A549 (cell line): ENCODE measurements at regions of chr12 and their contacts with region 1.

Region 1: GRCh38 chr12:53984901-53985709 is at the start of gene HOXC10:
- DNase-seq: peak; percentile 93 to 97
- ATAC-seq: peak; percentile 74 to 83
- H3K4me3 ChIP-seq: peak within 1 kb of the TSS; percentile 60
- H3K27ac ChIP-seq: peak within 1 kb of the TSS; percentile 88 to 89
- H3K4me1 ChIP-seq: peaks cover 24% of the 10 kb centered on the region
- CTCF ChIP-seq: peak; percentile 84
- EP300 ChIP-seq: no peak
- POLR2A ChIP-seq: no peak
- RAD21 ChIP-seq: peak; percentile 90 to 94
- polyA plus RNA-seq, gene HOXC10: 2.5 and 2.9 TPM in 2 replicates

Region 2: DNA sequence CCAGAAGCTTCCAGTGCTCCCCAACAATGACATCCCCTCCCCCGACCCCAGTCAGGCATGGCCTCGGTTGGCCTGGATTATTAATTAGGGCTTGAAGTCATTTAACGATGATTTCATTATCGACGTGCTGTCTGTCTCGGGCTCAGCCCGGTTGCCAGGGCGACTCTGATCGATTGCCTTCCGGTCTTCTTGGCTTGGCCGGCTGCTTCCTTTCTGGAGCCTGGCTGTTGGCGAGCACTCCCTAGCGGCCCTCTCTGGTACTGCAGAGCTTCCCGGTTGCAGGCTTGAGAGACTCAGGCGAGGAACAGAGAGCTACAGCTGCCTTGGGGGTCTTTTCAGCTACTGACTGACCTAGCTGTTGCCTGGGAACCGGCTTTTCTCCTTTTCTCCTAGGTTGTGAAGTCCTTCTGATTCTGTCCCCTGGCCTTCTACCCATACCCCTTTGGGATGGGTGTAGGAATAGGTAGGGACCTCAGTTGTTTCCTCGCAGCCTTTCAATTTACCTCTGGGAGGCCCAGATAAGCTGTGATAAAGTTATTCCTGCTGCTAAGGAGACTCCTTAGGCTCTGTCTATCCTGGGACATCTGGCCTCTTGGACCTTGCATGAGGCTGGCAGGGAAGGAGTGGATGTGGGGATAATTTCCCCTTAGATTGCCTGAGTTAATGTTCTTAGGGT is 227.9 kb before region 1 on chr12:
- CTCF ChIA-PET with region 1: interaction called, 12 read pairs
- POLR2A ChIA-PET with region 1: no interaction called
- DNase-seq: peak; percentile 78 to 86
- ATAC-seq: peak; percentile 59 to 84; a peak in 5 of 6 replicates
- H3K4me3 ChIP-seq: peak overlapping the region; percentile 30; the same call in 2 of the 3 replicates
- H3K27ac ChIP-seq: peak overlapping the region; percentile 53 to 73; a peak in 5 of 6 replicates
- H3K4me1 ChIP-seq: peaks cover 11% of the 10 kb centered on the region; the same call in 1 of the 3 replicates
- CTCF ChIP-seq: peak; percentile 65
- EP300 ChIP-seq: no peak
- POLR2A ChIP-seq: no peak
- RAD21 ChIP-seq: peak; percentile 24 to 60; a peak in 3 of 5 replicates

Region 3: DNA sequence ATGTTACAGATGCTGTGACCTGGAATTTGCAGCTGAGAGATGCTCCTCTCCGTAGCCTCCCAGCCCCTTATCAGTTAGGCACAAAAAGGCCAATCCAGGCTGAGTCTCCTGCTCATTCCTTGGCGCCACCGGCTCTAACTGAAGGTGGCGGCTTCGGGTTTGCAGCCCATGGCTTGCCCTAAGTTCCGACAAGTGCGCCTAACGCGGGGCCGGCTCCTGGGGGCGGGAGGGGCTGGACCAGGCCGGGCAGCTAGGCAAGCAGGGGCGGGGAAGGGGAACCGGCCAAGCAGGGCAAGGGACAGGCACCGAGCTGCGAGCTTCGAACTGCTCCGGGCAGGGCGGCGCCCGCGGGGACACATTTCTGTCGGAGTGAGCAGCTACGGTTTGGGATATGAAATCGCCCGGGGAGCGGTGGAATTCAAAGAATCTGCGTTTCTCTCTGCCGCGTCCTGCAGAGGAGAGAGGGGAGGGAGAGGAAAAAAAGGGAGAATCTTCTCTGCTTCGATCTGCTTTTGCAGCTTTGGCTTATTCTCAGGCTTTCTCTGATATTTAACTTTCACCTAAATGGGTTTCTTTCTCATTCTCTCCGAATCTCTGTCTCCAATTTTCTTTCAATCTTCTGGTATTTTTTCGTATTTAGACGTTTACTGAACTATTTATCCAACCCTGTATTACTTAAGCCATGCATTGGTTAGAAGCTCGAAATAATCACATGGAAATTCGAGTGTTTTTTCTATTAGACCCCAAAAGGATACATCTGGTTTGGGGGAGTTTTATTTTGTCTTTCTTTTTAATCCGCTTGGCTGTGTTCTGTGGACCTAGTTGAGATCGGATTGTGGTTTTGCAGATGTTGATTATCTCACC is 32.0 kb before region 1 on chr12:
- CTCF ChIA-PET with region 1: interaction called, 10 read pairs
- POLR2A ChIA-PET with region 1: no interaction called
- DNase-seq: peak; percentile 22 to 47
- ATAC-seq: peak; percentile 10 to 60; a peak in 4 of 6 replicates
- H3K4me3 ChIP-seq: no peak overlapping the region
- H3K27ac ChIP-seq: peak overlapping the region; percentile 17 to 72; a peak in 4 of 6 replicates
- H3K4me1 ChIP-seq: peaks cover 14% of the 10 kb centered on the region
- CTCF ChIP-seq: no peak
- EP300 ChIP-seq: no peak
- POLR2A ChIP-seq: no peak
- RAD21 ChIP-seq: no peak

Region 4: GRCh38 chr12:53999559-54000104 is 14.5 kb after region 1 on chr12:
- CTCF ChIA-PET with region 1: interaction called, 171 read pairs
- POLR2A ChIA-PET with region 1: interaction called, 4 read pairs
- DNase-seq: peak; percentile 82 to 92
- ATAC-seq: peak; percentile 30 to 64; a peak in 5 of 6 replicates
- H3K4me3 ChIP-seq: peak overlapping the region; percentile 83
- H3K27ac ChIP-seq: peak overlapping the region; percentile 93 to 96
- H3K4me1 ChIP-seq: peaks cover 14% of the 10 kb centered on the region
- CTCF ChIP-seq: no peak
- EP300 ChIP-seq: no peak
- POLR2A ChIP-seq: no peak
- RAD21 ChIP-seq: no peak

Region 5: GRCh38 chr12:54166567-54167499 is 181.7 kb after region 1 on chr12:
- CTCF ChIA-PET with region 1: no interaction called
- POLR2A ChIA-PET with region 1: no interaction called
- DNase-seq: no peak
- ATAC-seq: no peak
- H3K4me3 ChIP-seq: no peak overlapping the region
- H3K27ac ChIP-seq: no peak overlapping the region
- H3K4me1 ChIP-seq: no peaks in the 10 kb centered on the region
- CTCF ChIP-seq: no peak
- EP300 ChIP-seq: no peak
- POLR2A ChIP-seq: no peak
- RAD21 ChIP-seq: no peak

Region 6: DNA sequence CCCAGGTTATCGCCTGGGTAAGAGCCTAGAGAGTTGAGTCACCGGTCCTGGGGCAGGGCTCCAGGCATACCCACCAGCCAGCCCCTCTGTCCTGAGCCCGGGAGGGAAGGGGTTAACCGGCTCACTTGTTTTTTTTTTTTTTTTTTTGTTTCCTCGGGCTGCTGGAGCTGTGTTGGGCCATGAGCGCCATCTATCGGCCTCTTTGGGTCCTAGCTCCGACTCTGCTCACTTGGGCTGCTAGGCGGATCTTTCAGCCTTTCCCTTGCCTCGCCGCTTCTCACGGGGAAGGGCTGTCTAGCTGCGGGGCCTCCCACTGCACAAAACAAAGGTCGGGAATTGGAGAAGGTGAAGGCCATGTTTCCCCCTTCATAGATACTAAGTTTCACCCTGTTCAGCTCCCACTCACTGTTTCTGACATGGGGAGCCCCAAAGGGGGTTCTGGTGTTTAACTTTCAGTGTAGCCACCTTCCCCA is 206.5 kb after region 1 on chr12:
- CTCF ChIA-PET with region 1: interaction called, 1,074 read pairs
- POLR2A ChIA-PET with region 1: interaction called, 4 read pairs
- DNase-seq: peak; percentile 87 to 92
- ATAC-seq: peak; percentile 71 to 84
- H3K4me3 ChIP-seq: no peak overlapping the region
- H3K27ac ChIP-seq: peak overlapping the region; percentile 10 to 70; a peak in 3 of 6 replicates
- H3K4me1 ChIP-seq: peaks cover 25% of the 10 kb centered on the region
- CTCF ChIP-seq: peak; percentile 79
- EP300 ChIP-seq: no peak
- POLR2A ChIP-seq: no peak
- RAD21 ChIP-seq: peak; percentile 90 to 92

Region 7: DNA sequence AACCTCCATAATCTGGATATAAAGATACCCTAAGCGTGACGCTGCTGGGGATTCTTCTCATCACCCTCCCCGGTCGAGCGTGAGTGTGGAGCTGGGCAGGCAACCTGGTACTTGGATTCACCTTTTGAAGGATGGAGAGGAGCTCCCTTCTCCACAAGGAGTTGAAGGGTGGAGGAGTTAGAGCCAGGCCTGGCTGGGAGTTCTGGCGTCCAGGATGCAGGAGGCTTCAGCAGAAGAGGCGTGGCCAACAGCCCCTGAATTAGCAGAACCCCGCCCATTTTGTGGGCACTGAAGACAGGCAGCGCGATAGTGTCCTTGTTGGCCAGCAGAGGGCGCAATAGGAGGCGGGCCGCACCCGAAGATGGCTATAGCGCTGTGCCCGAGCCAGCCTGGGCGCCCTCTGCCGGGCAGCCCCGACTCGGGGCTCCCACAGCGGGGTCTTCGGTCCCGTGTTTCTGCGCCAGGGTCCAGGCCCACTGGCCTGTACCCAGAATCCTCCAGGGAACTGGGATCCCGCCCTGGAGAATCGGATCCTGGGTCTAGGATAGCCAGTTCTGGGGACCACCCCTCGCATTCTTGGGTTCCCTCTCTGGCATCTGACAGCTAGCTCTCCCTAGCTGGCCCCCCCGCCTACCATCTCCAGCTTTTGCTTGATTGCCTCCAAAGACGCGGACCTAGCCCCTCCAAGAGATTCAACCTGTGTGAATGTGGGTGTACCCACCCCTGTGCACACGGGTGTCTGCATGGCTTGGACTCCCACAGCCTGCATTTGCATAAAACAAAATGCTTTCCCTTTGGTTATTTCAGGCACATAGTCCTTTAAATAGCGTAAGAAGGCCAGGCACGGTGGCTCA is 229.7 kb after region 1 on chr12:
- CTCF ChIA-PET with region 1: interaction called, 1,074 read pairs
- POLR2A ChIA-PET with region 1: no interaction called
- DNase-seq: peak; percentile 78 to 95
- ATAC-seq: peak; percentile 70 to 88
- H3K4me3 ChIP-seq: peak overlapping the region; percentile 35
- H3K27ac ChIP-seq: peak overlapping the region; percentile 27 to 77; a peak in 4 of 6 replicates
- H3K4me1 ChIP-seq: peaks cover 9% of the 10 kb centered on the region; the same call in 1 of the 3 replicates
- CTCF ChIP-seq: peak; percentile 100
- EP300 ChIP-seq: no peak
- POLR2A ChIP-seq: no peak
- RAD21 ChIP-seq: peak; percentile 38 to 67

Region 8: GRCh38 chr12:54571193-54572188 is 586.4 kb after region 1 on chr12:
- CTCF ChIA-PET with region 1: no interaction called
- POLR2A ChIA-PET with region 1: no interaction called
- DNase-seq: no peak
- ATAC-seq: peak in 1 of 2 experiments; percentile 12; a peak in 3 of 6 replicates
- H3K4me3 ChIP-seq: no peak overlapping the region
- H3K27ac ChIP-seq: no peak overlapping the region
- H3K4me1 ChIP-seq: no peaks in the 10 kb centered on the region
- CTCF ChIP-seq: no peak
- EP300 ChIP-seq: no peak
- POLR2A ChIP-seq: no peak
- RAD21 ChIP-seq: no peak